Prostate gland (tissue), 2 donors: ENCODE measurements at regions of chr5 and their contacts with region 1.

Region 1: DNA sequence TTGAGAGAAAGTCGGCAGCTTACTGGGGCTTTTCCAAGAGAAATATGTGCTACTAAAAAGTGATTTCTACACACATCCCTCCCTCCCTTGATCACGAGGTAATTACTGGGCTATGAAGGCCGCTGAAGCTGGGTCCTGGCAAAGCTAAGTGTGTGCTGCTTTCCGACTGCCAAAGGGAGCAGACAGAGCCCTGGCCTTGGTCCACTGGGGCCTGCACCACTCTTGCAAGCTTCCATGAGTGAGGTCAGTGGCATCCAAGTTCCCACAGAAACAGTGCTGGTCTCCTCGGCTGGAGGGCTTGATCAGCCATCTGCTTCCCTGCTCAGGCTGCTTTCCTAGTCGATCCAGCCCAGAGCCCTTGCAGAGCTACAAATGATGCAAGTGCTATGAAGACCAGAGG is 154.8 kb upstream of the LHFPL2 start:
- DNase-seq: no peak
- H3K4me3 ChIP-seq: no peak overlapping the region
- H3K27ac ChIP-seq: no peak overlapping the region
- H3K4me1 ChIP-seq: no peaks in the 10 kb centered on the region
- H3K27me3 ChIP-seq: no peaks in the 10 kb centered on the region
- CTCF ChIP-seq: no peak
- POLR2A ChIP-seq: no peak

Region 2: DNA sequence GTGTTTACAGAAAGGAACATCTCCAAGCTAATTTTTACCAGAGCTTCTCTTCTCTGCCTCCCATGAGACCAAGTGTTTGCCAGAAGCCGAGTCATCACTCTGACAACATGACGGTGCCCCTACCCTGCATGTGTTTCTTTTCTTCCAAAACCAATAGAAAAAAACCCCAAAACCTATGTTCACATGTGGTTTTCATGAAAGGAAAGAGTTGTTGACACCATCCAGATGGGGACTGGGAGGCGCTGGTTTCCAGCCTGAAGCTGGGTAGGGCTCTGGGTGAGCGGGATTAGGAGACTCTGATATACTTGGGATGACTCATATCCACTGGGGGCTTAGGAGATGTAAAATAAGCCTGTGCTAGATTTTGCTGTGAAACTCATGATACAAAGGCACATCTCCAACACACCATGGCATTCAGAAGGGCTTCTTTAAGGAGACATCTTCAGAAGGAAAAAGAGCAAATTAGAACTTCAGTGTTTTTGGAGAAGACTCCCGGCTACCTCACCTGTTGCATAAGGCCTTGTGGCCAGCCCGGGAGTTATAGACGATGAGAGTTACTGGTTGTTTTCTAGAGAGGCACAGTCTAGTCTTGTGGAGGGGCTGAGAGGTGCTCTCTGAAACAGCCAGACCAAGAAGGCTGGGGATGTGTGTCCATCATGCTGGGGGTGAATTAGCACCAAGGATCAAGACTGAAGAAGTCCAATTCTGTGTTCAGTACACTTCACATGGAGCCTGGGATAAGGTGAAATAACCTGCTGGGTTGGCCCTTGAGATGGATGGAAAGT is 45.9 kb before region 1 on chr5:
- intact Hi-C with region 1: no loop called
- DNase-seq: no peak
- H3K4me3 ChIP-seq: no peak overlapping the region
- H3K27ac ChIP-seq: no peak overlapping the region
- H3K4me1 ChIP-seq: no peaks in the 10 kb centered on the region
- H3K27me3 ChIP-seq: no peaks in the 10 kb centered on the region
- CTCF ChIP-seq: no peak
- POLR2A ChIP-seq: no peak

Region 3: GRCh38 chr5:78899922-78900362 is 96.6 kb after region 1 on chr5:
- intact Hi-C with region 1: loop called (anchors 10 kb)
- DNase-seq: no peak
- H3K4me3 ChIP-seq: no peak overlapping the region
- H3K27ac ChIP-seq: no peak overlapping the region
- H3K4me1 ChIP-seq: no peaks in the 10 kb centered on the region
- H3K27me3 ChIP-seq: no peaks in the 10 kb centered on the region
- CTCF ChIP-seq: peak in 3 of 4 experiments; percentile 14 to 45 (median 28)
- POLR2A ChIP-seq: no peak

Region 4: DNA sequence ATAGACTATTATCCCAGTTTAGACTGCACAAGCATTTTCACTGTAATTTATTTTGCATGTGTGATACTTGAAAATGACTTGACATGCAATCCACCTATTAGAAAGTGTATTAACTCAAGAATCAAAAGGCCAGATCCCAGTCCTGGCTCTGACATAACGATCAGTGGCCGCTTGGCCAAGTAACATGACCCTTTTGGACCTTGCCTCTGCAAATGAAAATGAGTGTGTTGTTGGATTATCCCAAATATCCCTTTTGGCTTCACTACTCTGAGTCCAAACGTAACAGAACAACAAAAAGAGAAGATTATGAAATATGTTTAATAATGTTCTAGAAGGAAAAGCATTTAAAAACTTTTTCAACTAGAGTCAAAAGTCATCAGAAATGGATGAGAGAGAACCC is 247.1 kb after region 1 on chr5:
- intact Hi-C with region 1: no loop called
- DNase-seq: no peak
- H3K4me3 ChIP-seq: no peak overlapping the region
- H3K27ac ChIP-seq: no peak overlapping the region
- H3K4me1 ChIP-seq: no peaks in the 10 kb centered on the region
- H3K27me3 ChIP-seq: no peaks in the 10 kb centered on the region
- CTCF ChIP-seq: no peak
- POLR2A ChIP-seq: no peak

Region 5: GRCh38 chr5:79448336-79448735 is 645.0 kb after region 1 on chr5:
- intact Hi-C with region 1: no loop called
- DNase-seq: no peak
- H3K4me3 ChIP-seq: no peak overlapping the region
- H3K27ac ChIP-seq: no peak overlapping the region
- H3K4me1 ChIP-seq: no peaks in the 10 kb centered on the region
- H3K27me3 ChIP-seq: no peaks in the 10 kb centered on the region
- CTCF ChIP-seq: no peak
- POLR2A ChIP-seq: no peak